ENCODE measurements at regions of chr1 and their contacts with region 1.

Region 1: GRCh38 chr1:110034451-110035235 is at the start of gene STRIP1:
- DNase-seq: peak; percentile 95
- ATAC-seq: peak; percentile 94
- H3K4me3 Mint-ChIP-seq: peak within 1 kb of the TSS; percentile 92
- H3K27ac Mint-ChIP-seq: peak within 1 kb of the TSS; percentile 91
- H3K4me1 Mint-ChIP-seq: peaks cover 44% of the 10 kb centered on the region
- H3K27me3 Mint-ChIP-seq: no peaks in the 10 kb centered on the region
- CTCF ChIP-seq: no peak
- total RNA-seq, gene STRIP1: 24.6 to 24.8 TPM

Region 2: GRCh38 chr1:110003747-110004630 is 30.7 kb before region 1 on chr1:
- CTCF ChIA-PET with region 1: interaction called, 26 read pairs
- POLR2A ChIA-PET with region 1: interaction called, 4 read pairs
- intact Hi-C with region 1: no loop called
- DNase-seq: peak; percentile 68
- ATAC-seq: peak; percentile 87
- H3K4me3 Mint-ChIP-seq: no peak overlapping the region
- H3K27ac Mint-ChIP-seq: peak overlapping the region; percentile 61
- H3K4me1 Mint-ChIP-seq: peaks cover 26% of the 10 kb centered on the region
- H3K27me3 Mint-ChIP-seq: no peaks in the 10 kb centered on the region
- CTCF ChIP-seq: no peak

Region 3: GRCh38 chr1:110011527-110012041 is 23.1 kb before region 1 on chr1:
- CTCF ChIA-PET with region 1: interaction called, 49 read pairs
- POLR2A ChIA-PET with region 1: interaction called, 4 read pairs
- intact Hi-C with region 1: no loop called
- DNase-seq: peak; percentile 40
- ATAC-seq: peak; percentile 92
- H3K4me3 Mint-ChIP-seq: no peak overlapping the region
- H3K27ac Mint-ChIP-seq: no peak overlapping the region
- H3K4me1 Mint-ChIP-seq: no peaks in the 10 kb centered on the region
- H3K27me3 Mint-ChIP-seq: no peaks in the 10 kb centered on the region
- CTCF ChIP-seq: peak; percentile 60

Region 4: DNA sequence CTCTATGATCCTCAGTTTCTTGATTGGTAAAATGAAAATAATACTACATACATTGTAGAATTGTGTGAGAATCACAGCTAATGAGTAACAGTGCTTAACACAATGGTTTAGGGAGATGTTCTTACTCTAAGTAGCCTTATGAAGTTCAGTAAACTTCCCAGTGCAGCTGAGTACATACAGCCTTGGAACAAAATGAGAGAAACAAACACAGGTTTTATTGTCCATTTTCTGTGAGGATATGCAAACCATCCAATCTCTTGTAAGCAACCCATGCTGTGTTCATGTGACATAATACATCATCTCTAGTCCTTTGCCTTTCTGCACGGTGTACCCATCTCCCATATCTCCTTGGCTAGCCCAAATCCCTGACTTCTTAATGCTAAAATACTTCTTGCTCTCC is 14.9 kb before region 1 on chr1:
- CTCF ChIA-PET with region 1: interaction called, 49 read pairs
- POLR2A ChIA-PET with region 1: interaction called, 3 read pairs
- intact Hi-C with region 1: no loop called
- DNase-seq: no peak
- ATAC-seq: no peak
- H3K4me3 Mint-ChIP-seq: no peak overlapping the region
- H3K27ac Mint-ChIP-seq: no peak overlapping the region
- H3K4me1 Mint-ChIP-seq: no peaks in the 10 kb centered on the region
- H3K27me3 Mint-ChIP-seq: no peaks in the 10 kb centered on the region
- CTCF ChIP-seq: no peak

Region 5: GRCh38 chr1:110047471-110047870 is 12.8 kb after region 1 on chr1:
- CTCF ChIA-PET with region 1: interaction called, 110 read pairs
- POLR2A ChIA-PET with region 1: interaction called, 11 read pairs
- intact Hi-C with region 1: no loop called
- DNase-seq: no peak
- ATAC-seq: no peak
- H3K4me3 Mint-ChIP-seq: no peak overlapping the region
- H3K27ac Mint-ChIP-seq: no peak overlapping the region
- H3K4me1 Mint-ChIP-seq: no peaks in the 10 kb centered on the region
- H3K27me3 Mint-ChIP-seq: no peaks in the 10 kb centered on the region
- CTCF ChIP-seq: no peak

Region 6: GRCh38 chr1:110053557-110054428 is 19.1 kb after region 1 on chr1:
- CTCF ChIA-PET with region 1: interaction called, 110 read pairs
- POLR2A ChIA-PET with region 1: interaction called, 7 read pairs
- intact Hi-C with region 1: no loop called
- DNase-seq: peak; percentile 84
- ATAC-seq: peak; percentile 94
- H3K4me3 Mint-ChIP-seq: no peak overlapping the region
- H3K27ac Mint-ChIP-seq: no peak overlapping the region
- H3K4me1 Mint-ChIP-seq: no peaks in the 10 kb centered on the region
- H3K27me3 Mint-ChIP-seq: no peaks in the 10 kb centered on the region
- CTCF ChIP-seq: peak; percentile 94

Region 7: GRCh38 chr1:110106013-110106941 is 71.6 kb after region 1 on chr1:
- CTCF ChIA-PET with region 1: interaction called, 24 read pairs
- POLR2A ChIA-PET with region 1: no interaction called
- intact Hi-C with region 1: no loop called
- DNase-seq: peak; percentile 69
- ATAC-seq: peak; percentile 94
- H3K4me3 Mint-ChIP-seq: no peak overlapping the region
- H3K27ac Mint-ChIP-seq: no peak overlapping the region
- H3K4me1 Mint-ChIP-seq: no peaks in the 10 kb centered on the region
- H3K27me3 Mint-ChIP-seq: peaks cover 5% of the 10 kb centered on the region
- CTCF ChIP-seq: peak; percentile 82

Region 8: GRCh38 chr1:110356405-110356804 is 321.8 kb after region 1 on chr1:
- CTCF ChIA-PET with region 1: no interaction called
- POLR2A ChIA-PET with region 1: no interaction called
- intact Hi-C with region 1: no loop called
- DNase-seq: no peak
- ATAC-seq: no peak
- H3K4me3 Mint-ChIP-seq: no peak overlapping the region
- H3K27ac Mint-ChIP-seq: no peak overlapping the region
- H3K4me1 Mint-ChIP-seq: peaks cover 37% of the 10 kb centered on the region
- H3K27me3 Mint-ChIP-seq: no peaks in the 10 kb centered on the region
- CTCF ChIP-seq: no peak